Activated CD4-positive, alpha-beta memory T cell treated with anti-CD3 and anti-CD28 coated beads, Interleukin-2, amount 10 ng/mL, durations not matched to agents 7 days and 5 days (primary cell): ENCODE measurements at regions of chrX and their contacts with region 1.

Region 1: GRCh38 chrX:120485638-120486520 is 16.8 kb upstream of the LAMP2 start:
- DNase-seq: peak; percentile 66
- H3K4me3 Mint-ChIP-seq: peak overlapping the region; percentile 76
- H3K27ac Mint-ChIP-seq: peak overlapping the region; percentile 95
- H3K4me1 Mint-ChIP-seq: peaks cover 31% of the 10 kb centered on the region
- H3K27me3 Mint-ChIP-seq: no peaks in the 10 kb centered on the region

Region 2: DNA sequence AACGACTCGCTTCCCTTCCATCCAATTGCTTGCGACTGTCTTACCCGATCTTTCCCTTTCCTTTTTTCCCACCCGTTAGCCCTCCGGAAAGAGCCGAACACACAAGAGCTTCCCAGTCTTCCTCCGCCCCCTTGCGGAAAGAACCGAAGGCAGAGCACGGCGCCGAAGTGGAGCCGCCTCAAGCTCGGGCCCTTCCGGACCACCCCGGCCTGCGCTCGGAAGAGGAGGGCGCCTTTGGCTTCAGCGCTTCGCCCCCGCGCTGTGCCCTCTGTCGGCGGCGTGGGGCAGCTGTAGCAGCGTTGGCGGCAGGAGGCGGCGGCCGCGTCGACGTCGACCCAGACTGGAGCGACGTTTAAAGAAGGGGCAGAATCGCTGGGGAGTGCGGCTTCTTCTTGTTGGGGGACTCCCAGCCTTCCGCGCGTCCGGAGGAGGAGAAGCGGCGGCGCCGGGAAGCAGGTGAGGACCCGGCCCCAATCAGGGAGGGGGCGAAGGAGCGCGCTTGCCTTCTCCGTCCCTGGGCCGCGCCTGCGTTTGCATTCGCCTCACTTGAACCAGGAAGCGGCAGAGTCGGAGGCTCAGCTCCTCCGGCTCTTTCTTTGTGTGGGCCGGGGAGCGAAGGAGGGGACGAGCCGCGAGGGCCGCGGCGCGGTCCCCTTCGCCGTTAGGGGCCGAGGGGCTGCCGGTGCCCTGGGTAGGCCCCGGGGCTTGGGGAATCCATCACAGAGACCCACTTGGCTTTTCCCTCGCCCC is 235.2 kb before region 1 on chrX and contains the start of gene ZBTB33:
- CTCF ChIA-PET with region 1: interaction called, 4 read pairs
- POLR2A ChIA-PET with region 1: interaction called, 10 read pairs
- DNase-seq: peak; percentile 87
- H3K4me3 Mint-ChIP-seq: peak within 1 kb of the TSS; percentile 93
- H3K27ac Mint-ChIP-seq: peak within 1 kb of the TSS; percentile 94
- H3K4me1 Mint-ChIP-seq: peaks cover 29% of the 10 kb centered on the region
- H3K27me3 Mint-ChIP-seq: no peaks in the 10 kb centered on the region
- total RNA-seq, gene ZBTB33: 17.9 to 19.5 TPM

Region 3: GRCh38 chrX:120468825-120469525 is 16.9 kb before region 1 on chrX and contains the start of gene LAMP2:
- CTCF ChIA-PET with region 1: interaction called, 10 read pairs
- POLR2A ChIA-PET with region 1: interaction called, 18 read pairs
- DNase-seq: peak; percentile 86
- H3K4me3 Mint-ChIP-seq: peak within 1 kb of the TSS; percentile 91
- H3K27ac Mint-ChIP-seq: peak within 1 kb of the TSS; percentile 86
- H3K4me1 Mint-ChIP-seq: peaks cover 22% of the 10 kb centered on the region
- H3K27me3 Mint-ChIP-seq: peaks cover 2% of the 10 kb centered on the region
- total RNA-seq, gene LAMP2: 59.4 to 60.3 TPM

Region 4: GRCh38 chrX:120499301-120500072 is 13.6 kb after region 1 on chrX:
- CTCF ChIA-PET with region 1: interaction called, 10 read pairs
- POLR2A ChIA-PET with region 1: no interaction called
- DNase-seq: no peak
- H3K4me3 Mint-ChIP-seq: no peak overlapping the region
- H3K27ac Mint-ChIP-seq: no peak overlapping the region
- H3K4me1 Mint-ChIP-seq: peaks cover 7% of the 10 kb centered on the region
- H3K27me3 Mint-ChIP-seq: no peaks in the 10 kb centered on the region

Region 5: GRCh38 chrX:120560842-120561633 is 75.2 kb after region 1 on chrX and contains the start of gene CUL4B:
- CTCF ChIA-PET with region 1: interaction called, 3 read pairs
- POLR2A ChIA-PET with region 1: interaction called, 12 read pairs
- DNase-seq: peak; percentile 94
- H3K4me3 Mint-ChIP-seq: peak within 1 kb of the TSS; percentile 95
- H3K27ac Mint-ChIP-seq: peak within 1 kb of the TSS; percentile 95
- H3K4me1 Mint-ChIP-seq: peaks cover 24% of the 10 kb centered on the region
- H3K27me3 Mint-ChIP-seq: no peaks in the 10 kb centered on the region
- total RNA-seq, gene CUL4B: 45.5 to 46.1 TPM

Region 6: GRCh38 chrX:120603707-120604360 is 118.0 kb after region 1 on chrX and contains the start of gene MCTS1:
- CTCF ChIA-PET with region 1: interaction called, 11 read pairs
- POLR2A ChIA-PET with region 1: interaction called, 11 read pairs
- DNase-seq: peak; percentile 86
- H3K4me3 Mint-ChIP-seq: peak within 1 kb of the TSS; percentile 98
- H3K27ac Mint-ChIP-seq: peak within 1 kb of the TSS; percentile 100
- H3K4me1 Mint-ChIP-seq: peaks cover 9% of the 10 kb centered on the region
- H3K27me3 Mint-ChIP-seq: peaks cover 2% of the 10 kb centered on the region
- total RNA-seq, gene MCTS1: 52.6 to 53.8 TPM

Region 7: GRCh38 chrX:120736989-120737388 is 251.1 kb after region 1 on chrX:
- CTCF ChIA-PET with region 1: no interaction called
- POLR2A ChIA-PET with region 1: no interaction called
- DNase-seq: no peak
- H3K4me3 Mint-ChIP-seq: no peak overlapping the region
- H3K27ac Mint-ChIP-seq: no peak overlapping the region
- H3K4me1 Mint-ChIP-seq: peaks cover 5% of the 10 kb centered on the region
- H3K27me3 Mint-ChIP-seq: no peaks in the 10 kb centered on the region

Region 8: GRCh38 chrX:120874678-120875557 is 389.0 kb after region 1 on chrX:
- CTCF ChIA-PET with region 1: no interaction called
- POLR2A ChIA-PET with region 1: no interaction called
- DNase-seq: no peak
- H3K4me3 Mint-ChIP-seq: no peak overlapping the region
- H3K27ac Mint-ChIP-seq: no peak overlapping the region
- H3K4me1 Mint-ChIP-seq: no peaks in the 10 kb centered on the region
- H3K27me3 Mint-ChIP-seq: no peaks in the 10 kb centered on the region